CD4-positive, alpha-beta memory T cell (primary cell): ENCODE measurements at regions of chr11 and their contacts with region 1.

Region 1: GRCh38 chr11:107549253-107549953 is 16.1 kb downstream of the ALKBH8 start:
- DNase-seq: peak in 4 of 5 donors; percentile 32 to 43 (median 36)
- H3K4me3 ChIP-seq: no peak overlapping the region
- H3K4me3 Mint-ChIP-seq: no peak overlapping the region
- H3K27ac ChIP-seq: no peak overlapping the region
- H3K27ac Mint-ChIP-seq: no peak overlapping the region
- H3K4me1 ChIP-seq: no peaks in the 10 kb centered on the region
- H3K4me1 Mint-ChIP-seq: peaks cover 0 to 4% (median 0%) of the 10 kb centered on the region in 4 donors
- H3K27me3 ChIP-seq: no peaks in the 10 kb centered on the region
- H3K27me3 Mint-ChIP-seq: no peaks in the 10 kb centered on the region

Region 2: DNA sequence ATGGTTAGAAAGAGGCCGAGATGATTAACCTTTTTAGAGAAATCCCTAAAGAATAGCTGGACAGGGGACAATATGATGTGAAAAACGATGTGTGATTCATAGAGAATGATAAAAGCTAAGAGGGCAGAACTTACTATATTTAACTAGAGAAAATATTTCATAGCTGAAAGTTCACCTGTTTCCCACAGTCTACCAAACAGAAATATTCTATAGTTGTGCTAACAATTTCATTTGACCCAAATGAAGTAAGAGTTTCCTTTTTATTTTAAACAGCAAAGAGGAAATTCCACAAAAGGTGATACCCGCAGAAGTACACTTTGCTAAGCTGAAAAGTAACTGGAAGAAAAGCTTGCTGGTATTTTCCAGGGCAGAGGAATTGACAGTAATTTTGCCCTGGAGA is 10.6 kb before region 1 on chr11:
- CTCF ChIA-PET with region 1: interaction called, 54 read pairs
- POLR2A ChIA-PET with region 1: no interaction called
- intact Hi-C with region 1: no loop called
- DNase-seq: no peak
- H3K4me3 ChIP-seq: no peak overlapping the region
- H3K4me3 Mint-ChIP-seq: no peak overlapping the region
- H3K27ac ChIP-seq: no peak overlapping the region
- H3K27ac Mint-ChIP-seq: no peak overlapping the region
- H3K4me1 ChIP-seq: no peaks in the 10 kb centered on the region
- H3K4me1 Mint-ChIP-seq: peaks cover 0 to 7% (median under 1%) of the 10 kb centered on the region in 4 donors
- H3K27me3 ChIP-seq: no peaks in the 10 kb centered on the region
- H3K27me3 Mint-ChIP-seq: no peaks in the 10 kb centered on the region

Region 3: GRCh38 chr11:107606141-107606540 is 56.7 kb after region 1 on chr11:
- CTCF ChIA-PET with region 1: no interaction called
- POLR2A ChIA-PET with region 1: no interaction called
- intact Hi-C with region 1: no loop called
- DNase-seq: no peak
- H3K4me3 ChIP-seq: no peak overlapping the region
- H3K4me3 Mint-ChIP-seq: no peak overlapping the region
- H3K27ac ChIP-seq: no peak overlapping the region
- H3K27ac Mint-ChIP-seq: no peak overlapping the region
- H3K4me1 ChIP-seq: no peaks in the 10 kb centered on the region
- H3K4me1 Mint-ChIP-seq: no peaks in the 10 kb centered on the region
- H3K27me3 ChIP-seq: peaks cover 5% of the 10 kb centered on the region
- H3K27me3 Mint-ChIP-seq: peaks cover 44 to 49% of the 10 kb centered on the region in 2 donors

Region 4: GRCh38 chr11:107689317-107690202 is 140.2 kb after region 1 on chr11:
- CTCF ChIA-PET with region 1: interaction called, 45 read pairs
- POLR2A ChIA-PET with region 1: no interaction called
- intact Hi-C with region 1: loop called (anchors 1 kb)
- DNase-seq: peak; percentile 33 to 59 (median 40)
- H3K4me3 ChIP-seq: no peak overlapping the region
- H3K4me3 Mint-ChIP-seq: no peak overlapping the region
- H3K27ac ChIP-seq: no peak overlapping the region
- H3K27ac Mint-ChIP-seq: no peak overlapping the region
- H3K4me1 ChIP-seq: no peaks in the 10 kb centered on the region
- H3K4me1 Mint-ChIP-seq: peaks cover 0 to 5% (median 1%) of the 10 kb centered on the region in 4 donors
- H3K27me3 ChIP-seq: no peaks in the 10 kb centered on the region
- H3K27me3 Mint-ChIP-seq: peaks cover 11% of the 10 kb centered on the region in 2 donors

Region 5: GRCh38 chr11:107770551-107770951 is 221.1 kb after region 1 on chr11:
- CTCF ChIA-PET with region 1: interaction called, 6 read pairs
- POLR2A ChIA-PET with region 1: no interaction called
- intact Hi-C with region 1: loop called (anchors 1 kb)
- DNase-seq: no peak
- H3K4me3 ChIP-seq: no peak overlapping the region
- H3K4me3 Mint-ChIP-seq: no peak overlapping the region
- H3K27ac ChIP-seq: no peak overlapping the region
- H3K27ac Mint-ChIP-seq: no peak overlapping the region
- H3K4me1 ChIP-seq: no peaks in the 10 kb centered on the region
- H3K4me1 Mint-ChIP-seq: no peaks in the 10 kb centered on the region
- H3K27me3 ChIP-seq: no peaks in the 10 kb centered on the region
- H3K27me3 Mint-ChIP-seq: peaks cover 3 to 16% of the 10 kb centered on the region in 2 donors